K562 (cell line): ENCODE measurements at regions of chr18 and their contacts with region 1.

Region 1: DNA sequence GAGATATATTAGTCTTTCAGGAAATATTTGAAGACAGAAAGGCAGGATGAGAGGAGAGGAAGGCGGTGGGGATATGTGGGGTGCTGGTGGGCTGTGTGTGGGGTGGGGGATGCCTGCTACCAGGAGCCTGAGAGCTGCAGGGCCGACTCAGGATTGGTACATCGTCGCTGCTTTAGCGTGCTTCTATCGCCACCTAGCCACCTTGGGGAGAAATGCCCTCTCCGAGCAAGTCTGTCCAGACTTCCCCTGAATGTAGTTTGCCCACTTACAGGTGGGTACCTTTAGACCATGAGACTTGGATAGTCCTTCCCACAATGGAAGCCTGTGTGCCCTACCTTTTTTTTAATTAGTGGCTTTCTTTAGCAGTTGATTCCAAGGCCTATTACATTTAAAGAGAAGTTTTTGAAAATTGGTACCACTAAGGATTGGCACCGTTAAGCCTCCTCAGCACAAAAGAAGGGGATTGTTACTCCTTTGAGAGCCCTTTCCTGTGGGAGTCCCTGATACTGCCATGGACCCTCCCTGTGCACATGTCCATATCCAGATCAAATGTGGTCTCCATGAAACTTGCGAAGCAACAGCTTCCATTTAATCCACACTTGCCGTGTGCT is 114.1 kb upstream of the NDUFV2 start:
- DNase-seq: peak; percentile 46 to 84 (median 63)
- ATAC-seq: peak; percentile 92
- H3K4me3 ChIP-seq: no peak overlapping the region
- H3K27ac ChIP-seq: no peak overlapping the region
- H3K4me1 ChIP-seq: peaks cover 14 to 24% of the 10 kb centered on the region in 2 experiments; a peak in 4 of 5 replicates
- H3K27me3 ChIP-seq: no peaks in the 10 kb centered on the region
- CTCF ChIP-seq: peak; percentile 89 to 93 (median 91)
- EP300 ChIP-seq: 0 out of 2 replicates have a peak, but pooled peaks have one; percentile 19
- POLR2A ChIP-seq: no peak
- RAD21 ChIP-seq: peak; percentile 91 to 94

Region 2: DNA sequence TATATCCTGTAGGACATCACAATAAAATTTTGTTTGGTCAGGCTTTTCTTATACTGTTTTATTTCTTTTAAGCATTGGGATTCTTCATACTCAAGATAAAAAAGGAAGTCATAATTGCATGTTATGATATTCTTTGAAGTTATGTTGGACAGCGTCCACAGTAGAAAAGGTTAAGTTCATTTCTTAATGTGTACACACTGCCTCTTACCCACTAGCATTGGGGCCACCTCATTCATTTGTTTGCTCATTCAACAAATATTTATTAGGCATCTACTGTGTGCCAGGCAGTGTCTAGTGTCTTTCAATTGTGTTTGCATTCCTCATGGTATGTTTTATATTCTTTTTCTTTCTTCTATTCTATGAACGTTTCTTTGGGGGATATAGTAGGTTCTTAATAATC is 1351.1 kb before region 1 on chr18:
- CTCF ChIA-PET with region 1: no interaction called
- POLR2A ChIA-PET with region 1: no interaction called
- in situ Hi-C with region 1: no loop called
- intact Hi-C with region 1: no loop called
- DNase-seq: no peak
- ATAC-seq: no peak
- H3K4me3 ChIP-seq: no peak overlapping the region
- H3K27ac ChIP-seq: no peak overlapping the region
- H3K4me1 ChIP-seq: no peaks in the 10 kb centered on the region
- H3K27me3 ChIP-seq: no peaks in the 10 kb centered on the region
- CTCF ChIP-seq: no peak
- EP300 ChIP-seq: no peak
- POLR2A ChIP-seq: no peak
- RAD21 ChIP-seq: no peak

Region 3: GRCh38 chr18:8654503-8655451 is 333.6 kb before region 1 on chr18:
- CTCF ChIA-PET with region 1: interaction called, 14 read pairs
- POLR2A ChIA-PET with region 1: no interaction called
- in situ Hi-C with region 1: loop called (anchors 5 kb)
- intact Hi-C with region 1: no loop called
- DNase-seq: peak; percentile 33 to 56 (median 50)
- ATAC-seq: peak; percentile 60
- H3K4me3 ChIP-seq: no peak overlapping the region
- H3K27ac ChIP-seq: no peak overlapping the region
- H3K4me1 ChIP-seq: peaks cover 7 to 10% of the 10 kb centered on the region in 2 experiments; a peak in 3 of 5 replicates
- H3K27me3 ChIP-seq: no peaks in the 10 kb centered on the region; a peak in 1 of 5 replicates
- CTCF ChIP-seq: peak; percentile 54 to 92 (median 64); a peak in 4 of 6 replicates
- EP300 ChIP-seq: no peak
- POLR2A ChIP-seq: no peak
- RAD21 ChIP-seq: peak; percentile 91 to 93

Region 4: GRCh38 chr18:8696749-8697211 is 291.6 kb before region 1 on chr18:
- CTCF ChIA-PET with region 1: interaction called, 14 read pairs
- POLR2A ChIA-PET with region 1: interaction called, 4 read pairs
- in situ Hi-C with region 1: no loop called
- intact Hi-C with region 1: loop called (anchors 5 kb)
- DNase-seq: peak; percentile 74 to 90 (median 86)
- ATAC-seq: peak; percentile 95
- H3K4me3 ChIP-seq: no peak overlapping the region
- H3K27ac ChIP-seq: no peak overlapping the region
- H3K4me1 ChIP-seq: peaks cover 0 to 2% of the 10 kb centered on the region in 2 experiments; a peak in 1 of 5 replicates
- H3K27me3 ChIP-seq: no peaks in the 10 kb centered on the region
- CTCF ChIP-seq: peak; percentile 88 to 94 (median 91)
- EP300 ChIP-seq: no peak
- POLR2A ChIP-seq: no peak
- RAD21 ChIP-seq: peak; percentile 76 to 80

Region 5: GRCh38 chr18:8868276-8868675 is 120.1 kb before region 1 on chr18:
- CTCF ChIA-PET with region 1: interaction called, 3 read pairs
- POLR2A ChIA-PET with region 1: no interaction called
- in situ Hi-C with region 1: loop called (anchors 5 kb)
- intact Hi-C with region 1: no loop called
- DNase-seq: no peak
- ATAC-seq: peak; percentile 48
- H3K4me3 ChIP-seq: no peak overlapping the region
- H3K27ac ChIP-seq: no peak overlapping the region
- H3K4me1 ChIP-seq: peaks cover 8 to 14% of the 10 kb centered on the region in 2 experiments; a peak in 4 of 5 replicates
- H3K27me3 ChIP-seq: peaks cover 0 to 10% of the 10 kb centered on the region in 2 experiments; a peak in 2 of 5 replicates
- CTCF ChIP-seq: peak in 2 of 3 experiments; percentile 8 to 30; a peak in 1 of 6 replicates
- EP300 ChIP-seq: no peak
- POLR2A ChIP-seq: no peak
- RAD21 ChIP-seq: 0 out of 4 replicates have a peak, but pooled peaks of 1 of the 2 experiments have one; percentile 5

Region 6: DNA sequence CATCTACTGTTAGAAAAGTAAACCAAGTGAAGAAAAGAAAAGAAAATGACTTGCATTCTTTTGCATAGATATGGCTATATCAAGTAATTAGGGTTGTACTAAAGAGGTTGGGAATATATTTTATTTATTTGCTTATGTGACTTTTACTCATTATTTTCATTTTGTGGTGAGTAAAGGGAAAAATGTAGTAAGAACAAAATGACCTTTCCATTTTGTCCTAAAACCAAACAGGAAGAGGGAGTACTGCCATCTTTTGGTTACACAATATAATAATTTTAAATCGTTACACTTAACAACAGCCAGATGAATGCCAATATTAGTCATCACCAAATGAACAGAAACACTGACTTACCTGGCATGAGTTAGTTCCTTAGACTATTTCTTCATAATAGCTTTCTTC is 66.8 kb after region 1 on chr18:
- CTCF ChIA-PET with region 1: no interaction called
- POLR2A ChIA-PET with region 1: no interaction called
- in situ Hi-C with region 1: no loop called
- intact Hi-C with region 1: loop called (anchors 2 kb)
- DNase-seq: peak in 2 of 4 experiments; percentile 41 to 55
- ATAC-seq: peak; percentile 79
- H3K4me3 ChIP-seq: no peak overlapping the region
- H3K27ac ChIP-seq: peak overlapping the region; percentile 49
- H3K4me1 ChIP-seq: peaks cover 0 to 12% of the 10 kb centered on the region in 2 experiments; a peak in 3 of 5 replicates
- H3K27me3 ChIP-seq: no peaks in the 10 kb centered on the region
- CTCF ChIP-seq: peak in 2 of 3 experiments; percentile 39 to 75; a peak in 3 of 6 replicates
- EP300 ChIP-seq: 0 out of 2 replicates have a peak, but pooled peaks have one; percentile 6
- POLR2A ChIP-seq: no peak
- RAD21 ChIP-seq: peak; percentile 84 to 90

Region 7: DNA sequence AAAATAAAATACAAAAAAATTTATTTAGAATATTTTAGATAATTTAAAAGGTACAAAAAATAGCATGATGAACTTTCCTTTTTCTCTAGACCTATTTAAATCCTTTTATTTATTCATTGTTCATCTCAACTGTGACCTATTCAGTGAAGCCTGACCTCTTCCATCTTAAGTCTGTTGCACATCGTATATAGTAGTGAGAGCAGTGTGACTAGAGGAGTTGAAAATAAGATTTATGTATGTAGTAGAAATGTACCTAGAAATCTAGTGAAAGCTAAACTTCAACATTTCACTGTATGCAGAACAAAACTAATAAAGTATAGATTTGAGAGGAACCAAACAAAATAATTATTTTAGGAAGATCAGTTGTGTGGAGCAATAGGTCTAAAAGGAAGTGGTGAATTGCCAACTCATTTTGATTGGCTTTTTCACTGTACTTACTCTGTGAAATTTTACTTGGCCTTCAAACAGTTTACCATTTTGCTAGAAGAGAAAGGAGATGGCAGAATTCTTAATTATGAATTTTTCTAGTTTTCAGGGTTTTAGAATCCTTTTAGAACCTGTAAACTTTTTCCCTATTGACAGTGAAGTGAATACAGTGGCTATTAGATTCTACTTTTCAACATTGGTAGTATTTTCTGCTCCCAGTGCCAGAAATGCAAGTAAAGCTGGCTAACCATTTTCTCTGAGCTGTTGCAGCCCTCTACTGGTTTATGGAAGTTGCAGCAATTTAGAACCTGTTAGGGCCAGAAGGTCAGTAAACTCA is 159.3 kb after region 1 on chr18:
- CTCF ChIA-PET with region 1: no interaction called
- POLR2A ChIA-PET with region 1: interaction called, 3 read pairs
- in situ Hi-C with region 1: no loop called
- intact Hi-C with region 1: loop called (anchors 5 kb)
- DNase-seq: peak in 2 of 4 experiments; percentile 62 to 81
- ATAC-seq: peak; percentile 88
- H3K4me3 ChIP-seq: no peak overlapping the region
- H3K27ac ChIP-seq: peak overlapping the region; percentile 22; the same call in 2 of the 3 replicates
- H3K4me1 ChIP-seq: peaks cover 3 to 13% of the 10 kb centered on the region in 2 experiments; a peak in 4 of 5 replicates
- H3K27me3 ChIP-seq: no peaks in the 10 kb centered on the region
- CTCF ChIP-seq: peak; percentile 79 to 92 (median 81)
- EP300 ChIP-seq: no peak; the same call in 1 of the 2 replicates
- POLR2A ChIP-seq: no peak
- RAD21 ChIP-seq: peak; percentile 96

Region 8: GRCh38 chr18:9296233-9297006 is 308.1 kb after region 1 on chr18:
- CTCF ChIA-PET with region 1: no interaction called
- POLR2A ChIA-PET with region 1: no interaction called
- in situ Hi-C with region 1: no loop called
- intact Hi-C with region 1: no loop called
- DNase-seq: no peak
- ATAC-seq: no peak
- H3K4me3 ChIP-seq: no peak overlapping the region
- H3K27ac ChIP-seq: no peak overlapping the region
- H3K4me1 ChIP-seq: no peaks in the 10 kb centered on the region
- H3K27me3 ChIP-seq: no peaks in the 10 kb centered on the region
- CTCF ChIP-seq: no peak
- EP300 ChIP-seq: no peak
- POLR2A ChIP-seq: no peak
- RAD21 ChIP-seq: no peak